ENCODE measurements at regions of chr13 and their contacts with region 1.

Region 1: GRCh38 chr13:78317030-78317429 is 286.3 kb downstream of the POU4F1 start:
- DNase-seq: peak; percentile 60
- H3K4me3 ChIP-seq: no peak overlapping the region
- H3K27ac ChIP-seq: no peak overlapping the region
- H3K4me1 ChIP-seq: no peaks in the 10 kb centered on the region
- H3K27me3 ChIP-seq: no peaks in the 10 kb centered on the region
- CTCF ChIP-seq: peak; percentile 71

Region 2: DNA sequence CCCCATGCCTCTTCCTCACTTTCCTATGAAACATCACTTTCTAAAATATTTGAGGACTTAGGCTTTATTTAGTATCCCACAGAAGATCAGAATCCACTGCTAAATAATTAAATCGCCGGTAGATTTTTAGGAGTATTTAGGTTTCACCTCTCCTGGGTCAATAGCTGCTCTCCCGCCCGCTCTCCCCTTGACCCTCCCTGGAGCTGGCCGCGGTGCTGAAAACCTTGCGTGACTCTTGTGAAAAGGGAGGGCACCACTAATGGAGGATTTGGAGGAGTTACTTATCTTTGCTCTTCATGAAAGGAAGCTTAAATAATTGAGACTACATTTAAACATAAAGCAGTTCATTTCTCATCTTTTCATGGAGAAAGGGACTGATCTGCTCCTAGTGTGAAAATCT is 272.2 kb after region 1 on chr13:
- CTCF ChIA-PET with region 1: no interaction called
- POLR2A ChIA-PET with region 1: no interaction called
- intact Hi-C with region 1: loop called (anchors 10 kb)
- DNase-seq: peak; percentile 54
- H3K4me3 ChIP-seq: no peak overlapping the region
- H3K27ac ChIP-seq: no peak overlapping the region
- H3K4me1 ChIP-seq: no peaks in the 10 kb centered on the region
- H3K27me3 ChIP-seq: peaks cover 84% of the 10 kb centered on the region
- CTCF ChIP-seq: no peak

Measured in A673 (cell line).